Psoas muscle (tissue), 8 donors: ENCODE measurements at regions of chr4 and their contacts with region 1.

Region 1: GRCh38 chr4:175953960-175954521 is 111.6 kb upstream of the WDR17 start:
- DNase-seq: no peak
- ATAC-seq: no peak
- H3K4me3 ChIP-seq: no peak overlapping the region
- H3K27ac ChIP-seq: no peak overlapping the region
- H3K4me1 ChIP-seq: no peaks in the 10 kb centered on the region
- H3K27me3 ChIP-seq: no peaks in the 10 kb centered on the region
- CTCF ChIP-seq: no peak

Region 2: DNA sequence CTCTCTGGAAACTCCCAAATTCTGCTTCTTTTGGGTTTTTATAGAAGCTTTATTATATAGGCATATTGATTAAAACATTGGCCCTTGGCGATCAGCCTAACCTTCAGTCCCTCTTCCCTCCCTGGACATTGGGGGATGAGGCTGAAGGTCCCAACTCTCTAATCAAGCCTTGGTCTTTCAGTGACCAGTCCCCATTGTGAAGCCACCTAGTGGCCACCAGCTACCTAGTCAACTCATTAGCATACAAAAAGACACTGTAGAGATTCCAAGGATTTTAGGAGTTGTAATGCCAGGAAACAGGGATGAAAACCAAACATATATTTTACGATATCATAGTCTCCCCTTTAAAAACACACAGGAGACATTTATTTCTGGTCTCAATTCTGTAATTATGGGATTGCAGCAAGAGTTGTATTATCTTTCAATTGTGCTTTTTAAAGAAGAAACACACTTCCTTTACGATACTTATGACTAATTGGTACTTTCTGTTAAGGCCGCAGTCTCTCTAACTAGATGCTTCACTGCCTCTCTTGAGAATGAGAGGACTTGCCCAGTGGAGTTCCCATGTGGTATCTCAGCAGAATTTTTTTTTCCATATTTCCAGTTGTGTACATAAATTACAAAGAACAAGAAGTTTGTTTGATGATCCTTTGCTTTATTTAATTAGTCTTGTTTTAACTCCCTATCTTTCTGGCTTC is 169.8 kb after region 1 on chr4:
- intact Hi-C with region 1: loop called in 1 of 2 experiments (anchors 10 kb)
- DNase-seq: no peak
- ATAC-seq: peak in 1 of 4 donors; percentile 55
- H3K4me3 ChIP-seq: no peak overlapping the region
- H3K27ac ChIP-seq: no peak overlapping the region
- H3K4me1 ChIP-seq: no peaks in the 10 kb centered on the region
- H3K27me3 ChIP-seq: no peaks in the 10 kb centered on the region
- CTCF ChIP-seq: peak; percentile 49

Region 3: GRCh38 chr4:176207839-176208238 is 253.8 kb after region 1 on chr4:
- intact Hi-C with region 1: no loop called
- DNase-seq: no peak
- ATAC-seq: no peak
- H3K4me3 ChIP-seq: no peak overlapping the region
- H3K27ac ChIP-seq: no peak overlapping the region
- H3K4me1 ChIP-seq: no peaks in the 10 kb centered on the region
- H3K27me3 ChIP-seq: no peaks in the 10 kb centered on the region
- CTCF ChIP-seq: no peak